GM12878 (cell line): ENCODE measurements at regions of chr3 and their contacts with region 1.

Region 1: GRCh38 chr3:142279965-142280590 is 54.7 kb upstream of the GK5 start:
- DNase-seq: peak; percentile 53
- ATAC-seq: peak; percentile 100
- H3K4me3 ChIP-seq: no peak overlapping the region
- H3K27ac ChIP-seq: no peak overlapping the region
- H3K4me1 ChIP-seq: no peaks in the 10 kb centered on the region; the same call in 1 of the 2 replicates
- H3K27me3 ChIP-seq: no peaks in the 10 kb centered on the region
- CTCF ChIP-seq: peak; percentile 53 to 91 (median 67); a peak in 4 of 6 replicates
- EP300 ChIP-seq: no peak
- POLR2A ChIP-seq: no peak
- RAD21 ChIP-seq: peak; percentile 93

Region 2: GRCh38 chr3:141460097-141460704 is 819.9 kb before region 1 on chr3:
- CTCF ChIA-PET with region 1: no interaction called
- POLR2A ChIA-PET with region 1: no interaction called
- RAD21 ChIA-PET with region 1: interaction called, 3 read pairs
- SMC1A ChIA-PET with region 1: no interaction called
- in situ Hi-C with region 1: no loop called
- intact Hi-C with region 1: loop called (anchors 5 kb)
- DNase-seq: no peak
- ATAC-seq: peak; percentile 100
- H3K4me3 ChIP-seq: no peak overlapping the region
- H3K27ac ChIP-seq: no peak overlapping the region
- H3K4me1 ChIP-seq: peaks cover 3% of the 10 kb centered on the region; the same call in 1 of the 2 replicates
- H3K27me3 ChIP-seq: no peaks in the 10 kb centered on the region
- CTCF ChIP-seq: peak; percentile 79 to 96 (median 87)
- EP300 ChIP-seq: no peak
- POLR2A ChIP-seq: no peak
- RAD21 ChIP-seq: peak; percentile 89

Region 3: DNA sequence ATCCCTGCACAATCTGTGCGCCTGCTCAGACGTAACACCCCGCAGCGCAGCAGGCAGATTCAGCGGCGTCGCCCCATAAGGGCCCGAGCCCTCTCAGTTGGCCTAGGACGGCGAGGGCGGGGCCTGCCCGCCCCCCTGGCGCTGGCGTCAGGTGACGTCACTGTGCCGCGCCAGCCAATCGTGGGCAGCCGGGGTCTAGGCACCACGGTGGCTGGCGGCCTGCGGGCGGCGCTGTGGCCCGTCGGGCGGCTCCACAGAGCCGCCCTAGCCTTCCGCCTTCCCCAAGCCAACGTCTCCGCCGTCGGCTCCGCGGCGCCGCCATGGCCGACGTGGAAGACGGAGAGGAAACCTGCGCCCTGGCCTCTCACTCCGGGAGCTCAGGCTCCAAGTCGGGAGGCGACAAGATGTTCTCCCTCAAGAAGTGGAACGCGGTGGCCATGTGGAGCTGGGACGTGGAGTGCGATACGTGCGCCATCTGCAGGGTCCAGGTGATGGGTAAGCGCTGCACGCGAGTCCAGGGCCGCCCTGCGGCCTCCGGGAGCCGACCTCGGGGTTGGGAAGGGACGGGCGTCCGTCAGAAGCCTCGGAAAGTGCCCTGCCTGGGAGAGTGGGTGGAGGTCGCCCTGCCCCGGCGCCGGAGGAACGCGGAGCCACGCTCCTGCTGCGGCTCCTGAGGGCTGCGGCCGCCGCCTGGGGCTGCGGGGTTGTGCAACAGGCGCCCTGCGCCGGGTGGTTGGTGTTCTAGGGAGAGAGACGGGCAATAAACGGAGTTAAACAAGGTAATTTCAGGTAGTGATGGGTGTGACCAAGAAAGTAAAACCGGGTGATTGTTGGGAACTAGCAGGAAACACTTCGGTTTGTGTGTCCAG is 541.8 kb before region 1 on chr3 and contains the start of gene RNF7:
- CTCF ChIA-PET with region 1: no interaction called
- POLR2A ChIA-PET with region 1: interaction called, 3 read pairs
- RAD21 ChIA-PET with region 1: no interaction called
- SMC1A ChIA-PET with region 1: no interaction called
- in situ Hi-C with region 1: no loop called
- intact Hi-C with region 1: loop called (anchors 5 kb)
- DNase-seq: peak; percentile 83
- ATAC-seq: peak; percentile 95
- H3K4me3 ChIP-seq: peak within 1 kb of the TSS; percentile 91
- H3K27ac ChIP-seq: peak within 1 kb of the TSS; percentile 87
- H3K4me1 ChIP-seq: 0 out of 2 replicates have a peak, but pooled peaks cover 5% of the 10 kb centered on the region
- H3K27me3 ChIP-seq: no peaks in the 10 kb centered on the region
- CTCF ChIP-seq: peak; percentile 79 to 98 (median 94); a peak in 5 of 6 replicates
- EP300 ChIP-seq: no peak
- POLR2A ChIP-seq: peak; percentile 97
- RAD21 ChIP-seq: peak; percentile 61
- polyA plus RNA-seq, gene RNF7: 83.8 to 98.6 TPM

Region 4: GRCh38 chr3:142022381-142022780 is 257.7 kb before region 1 on chr3:
- CTCF ChIA-PET with region 1: interaction called, 37 read pairs
- POLR2A ChIA-PET with region 1: no interaction called
- RAD21 ChIA-PET with region 1: interaction called, 8 read pairs
- SMC1A ChIA-PET with region 1: interaction called, 10 read pairs
- in situ Hi-C with region 1: no loop called
- intact Hi-C with region 1: loop called (anchors 1 kb)
- DNase-seq: peak; percentile 45
- ATAC-seq: peak; percentile 90
- H3K4me3 ChIP-seq: 0 out of 2 replicates have a peak overlapping the region, but pooled peaks have one; percentile 14
- H3K27ac ChIP-seq: no peak overlapping the region
- H3K4me1 ChIP-seq: peaks cover 14% of the 10 kb centered on the region
- H3K27me3 ChIP-seq: no peaks in the 10 kb centered on the region
- CTCF ChIP-seq: peak; percentile 43 to 81 (median 44); a peak in 4 of 6 replicates
- EP300 ChIP-seq: no peak
- POLR2A ChIP-seq: no peak
- RAD21 ChIP-seq: peak; percentile 74

Region 5: GRCh38 chr3:142129516-142130171 is 150.4 kb before region 1 on chr3:
- CTCF ChIA-PET with region 1: interaction called, 43 read pairs
- POLR2A ChIA-PET with region 1: no interaction called
- RAD21 ChIA-PET with region 1: interaction called, 12 read pairs
- SMC1A ChIA-PET with region 1: interaction called, 16 read pairs
- in situ Hi-C with region 1: no loop called
- intact Hi-C with region 1: loop called (anchors 1 kb)
- DNase-seq: no peak
- ATAC-seq: no peak
- H3K4me3 ChIP-seq: no peak overlapping the region
- H3K27ac ChIP-seq: no peak overlapping the region
- H3K4me1 ChIP-seq: no peaks in the 10 kb centered on the region
- H3K27me3 ChIP-seq: no peaks in the 10 kb centered on the region
- CTCF ChIP-seq: no peak
- EP300 ChIP-seq: no peak
- POLR2A ChIP-seq: no peak
- RAD21 ChIP-seq: no peak

Region 6: GRCh38 chr3:142251951-142252350 is 28.1 kb before region 1 on chr3:
- CTCF ChIA-PET with region 1: no interaction called
- POLR2A ChIA-PET with region 1: no interaction called
- RAD21 ChIA-PET with region 1: no interaction called
- SMC1A ChIA-PET with region 1: no interaction called
- in situ Hi-C with region 1: no loop called
- intact Hi-C with region 1: no loop called
- DNase-seq: no peak
- ATAC-seq: no peak
- H3K4me3 ChIP-seq: no peak overlapping the region
- H3K27ac ChIP-seq: no peak overlapping the region
- H3K4me1 ChIP-seq: no peaks in the 10 kb centered on the region
- H3K27me3 ChIP-seq: no peaks in the 10 kb centered on the region
- CTCF ChIP-seq: no peak
- EP300 ChIP-seq: no peak
- POLR2A ChIP-seq: no peak
- RAD21 ChIP-seq: no peak

Region 7: GRCh38 chr3:142746646-142747045 is 466.6 kb after region 1 on chr3:
- CTCF ChIA-PET with region 1: no interaction called
- POLR2A ChIA-PET with region 1: no interaction called
- RAD21 ChIA-PET with region 1: no interaction called
- SMC1A ChIA-PET with region 1: no interaction called
- in situ Hi-C with region 1: no loop called
- intact Hi-C with region 1: no loop called
- DNase-seq: no peak
- ATAC-seq: no peak
- H3K4me3 ChIP-seq: no peak overlapping the region
- H3K27ac ChIP-seq: no peak overlapping the region
- H3K4me1 ChIP-seq: no peaks in the 10 kb centered on the region
- H3K27me3 ChIP-seq: peaks cover 0 to 2% of the 10 kb centered on the region in 2 experiments; a peak in 1 of 4 replicates
- CTCF ChIP-seq: no peak
- EP300 ChIP-seq: no peak
- POLR2A ChIP-seq: no peak
- RAD21 ChIP-seq: no peak